Common myeloid progenitor, CD34-positive (primary cell): ENCODE measurements at regions of chr14 and their contacts with region 1.

Region 1: GRCh38 chr14:34098045-34098984 is 147.4 kb upstream of the EGLN3 start:
- DNase-seq: peak; percentile 32 to 57 (median 43)
- H3K4me3 ChIP-seq: no peak overlapping the region
- H3K27ac ChIP-seq: no peak overlapping the region
- H3K4me1 ChIP-seq: no peaks in the 10 kb centered on the region
- H3K27me3 ChIP-seq: peaks cover 0 to 2% (median 0%) of the 10 kb centered on the region in 5 experiments

Region 2: GRCh38 chr14:33839193-33840076 is 258.9 kb before region 1 on chr14:
- CTCF ChIA-PET with region 1: interaction called, 351 read pairs
- POLR2A ChIA-PET with region 1: interaction called, 3 read pairs
- DNase-seq: peak; percentile 54 to 76 (median 68)
- H3K4me3 ChIP-seq: no peak overlapping the region
- H3K27ac ChIP-seq: no peak overlapping the region
- H3K4me1 ChIP-seq: peaks cover 0 to 4% (median 0%) of the 10 kb centered on the region in 4 experiments
- H3K27me3 ChIP-seq: no peaks in the 10 kb centered on the region

Region 3: DNA sequence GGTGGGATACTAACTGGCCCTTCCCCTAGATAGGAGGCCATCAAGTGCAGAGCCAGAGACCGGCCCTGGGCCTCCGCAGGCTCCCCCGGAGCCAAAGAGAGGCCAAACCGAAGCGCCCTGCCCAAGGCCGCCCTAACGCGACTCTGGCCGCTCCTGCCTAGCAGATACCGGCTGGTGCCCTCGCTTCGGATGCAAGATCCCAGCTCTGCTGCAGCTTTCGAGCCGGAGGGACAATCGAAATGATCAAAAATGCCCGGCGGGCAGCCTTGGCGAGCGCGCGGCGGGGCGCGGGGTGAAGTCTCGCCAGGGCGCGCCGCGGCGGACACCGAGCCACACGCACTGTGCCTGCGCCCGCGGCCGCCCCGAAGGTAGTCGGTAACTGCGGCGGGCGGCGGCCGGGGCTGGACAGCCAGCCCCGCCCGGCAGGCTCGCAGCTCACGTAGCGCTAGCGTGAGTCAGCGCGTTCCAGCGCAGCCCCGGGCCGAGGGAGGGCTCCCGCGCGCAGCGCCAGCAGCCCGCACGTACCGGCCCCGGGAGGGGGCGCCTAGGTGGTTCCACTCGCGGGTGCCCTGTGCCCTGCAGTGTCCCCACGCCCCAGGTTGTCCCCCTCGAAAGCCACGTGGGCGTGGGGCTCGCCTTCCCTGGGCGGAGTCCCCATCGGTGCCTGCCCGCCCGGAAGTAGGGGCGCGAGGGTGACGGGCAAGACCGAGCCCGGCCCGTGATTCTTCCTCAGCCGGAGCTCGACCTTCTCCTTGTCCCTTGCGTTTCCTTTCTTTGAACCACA is 38.3 kb before region 1 on chr14:
- CTCF ChIA-PET with region 1: interaction called, 54 read pairs
- POLR2A ChIA-PET with region 1: no interaction called
- DNase-seq: peak; percentile 71 to 89 (median 86)
- H3K4me3 ChIP-seq: peak overlapping the region; percentile 42 to 82 (median 77)
- H3K27ac ChIP-seq: peak overlapping the region in 1 of 2 experiments; percentile 64
- H3K4me1 ChIP-seq: peaks cover 4 to 16% (median 12%) of the 10 kb centered on the region in 4 experiments
- H3K27me3 ChIP-seq: peaks cover 0 to 8% (median 0%) of the 10 kb centered on the region in 5 experiments

Region 4: GRCh38 chr14:34070917-34071407 is 27.4 kb before region 1 on chr14:
- CTCF ChIA-PET with region 1: no interaction called
- POLR2A ChIA-PET with region 1: no interaction called
- DNase-seq: no peak
- H3K4me3 ChIP-seq: no peak overlapping the region
- H3K27ac ChIP-seq: no peak overlapping the region
- H3K4me1 ChIP-seq: peaks cover 0 to 7% (median 6%) of the 10 kb centered on the region in 4 experiments
- H3K27me3 ChIP-seq: no peaks in the 10 kb centered on the region

Region 5: GRCh38 chr14:34128665-34129064 is 30.4 kb after region 1 on chr14:
- CTCF ChIA-PET with region 1: no interaction called
- POLR2A ChIA-PET with region 1: no interaction called
- DNase-seq: no peak
- H3K4me3 ChIP-seq: no peak overlapping the region
- H3K27ac ChIP-seq: no peak overlapping the region
- H3K4me1 ChIP-seq: no peaks in the 10 kb centered on the region
- H3K27me3 ChIP-seq: peaks cover 0 to 7% (median 3%) of the 10 kb centered on the region in 5 experiments